ENCODE measurements at regions of chr6 and their contacts with region 1.

Region 1: DNA sequence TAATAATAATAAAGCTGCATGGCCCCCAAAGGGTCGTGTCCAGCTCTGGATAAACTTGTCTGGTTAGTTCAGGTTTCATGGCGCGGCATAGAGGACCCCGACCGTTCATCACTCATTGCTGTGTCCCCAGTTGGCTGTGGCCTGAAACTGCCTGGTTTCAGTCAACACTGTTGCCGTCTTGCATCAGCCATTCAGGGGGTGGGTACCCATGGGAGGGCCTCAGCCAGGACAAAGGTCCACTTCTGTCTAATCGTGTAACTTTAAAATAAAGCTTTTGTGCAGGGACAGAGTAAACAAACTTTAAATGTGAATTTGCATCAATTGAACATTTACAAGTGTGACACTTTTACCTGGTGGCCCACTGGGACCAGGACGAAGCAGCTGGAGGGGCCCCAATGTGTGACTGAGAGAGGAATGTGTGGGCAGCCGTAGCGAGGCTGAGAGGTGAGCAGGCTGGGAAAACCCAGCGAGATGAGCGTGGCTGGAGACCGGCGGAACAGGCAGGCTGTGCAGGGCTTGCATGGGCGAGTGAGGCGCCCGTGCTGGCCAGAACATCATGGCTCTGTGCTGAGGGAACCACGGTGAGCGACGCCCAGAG is 22.3 kb upstream of the UNC93A start:
- DNase-seq: peak; percentile 93
- ATAC-seq: peak; percentile 95
- H3K4me3 ChIP-seq: peak overlapping the region; percentile 2 to 58 (median 5); a peak in 3 of 6 replicates
- H3K27ac ChIP-seq: peak overlapping the region; percentile 88
- H3K4me1 ChIP-seq: peaks cover 88% of the 10 kb centered on the region
- H3K27me3 ChIP-seq: no peaks in the 10 kb centered on the region
- CTCF ChIP-seq: peak; percentile 24; the same call in 1 of the 2 replicates
- EP300 ChIP-seq: peak; percentile 71 to 94; a peak in 3 of 4 replicates
- POLR2A ChIP-seq: peak; percentile 74 to 83
- RAD21 ChIP-seq: peak; percentile 74

Region 2: GRCh38 chr6:167163476-167164011 is 105.2 kb before region 1 on chr6:
- CTCF ChIA-PET with region 1: no interaction called
- POLR2A ChIA-PET with region 1: no interaction called
- in situ Hi-C with region 1: no loop called
- intact Hi-C with region 1: no loop called
- DNase-seq: no peak
- ATAC-seq: no peak
- H3K4me3 ChIP-seq: no peak overlapping the region
- H3K27ac ChIP-seq: no peak overlapping the region
- H3K4me1 ChIP-seq: peaks cover 17% of the 10 kb centered on the region
- H3K27me3 ChIP-seq: peaks cover 1 to 46% of the 10 kb centered on the region in 2 experiments; a peak in 4 of 5 replicates
- CTCF ChIP-seq: no peak
- EP300 ChIP-seq: no peak
- POLR2A ChIP-seq: no peak
- RAD21 ChIP-seq: no peak

Region 3: GRCh38 chr6:167221400-167222201 is 47.2 kb before region 1 on chr6:
- CTCF ChIA-PET with region 1: no interaction called
- POLR2A ChIA-PET with region 1: interaction called, 48 read pairs
- in situ Hi-C with region 1: no loop called
- intact Hi-C with region 1: loop called (anchors 1 kb)
- DNase-seq: no peak
- ATAC-seq: no peak
- H3K4me3 ChIP-seq: no peak overlapping the region
- H3K27ac ChIP-seq: peak overlapping the region; percentile 82
- H3K4me1 ChIP-seq: peaks cover 95% of the 10 kb centered on the region
- H3K27me3 ChIP-seq: no peaks in the 10 kb centered on the region
- CTCF ChIP-seq: no peak
- EP300 ChIP-seq: no peak
- POLR2A ChIP-seq: no peak
- RAD21 ChIP-seq: no peak

Region 4: DNA sequence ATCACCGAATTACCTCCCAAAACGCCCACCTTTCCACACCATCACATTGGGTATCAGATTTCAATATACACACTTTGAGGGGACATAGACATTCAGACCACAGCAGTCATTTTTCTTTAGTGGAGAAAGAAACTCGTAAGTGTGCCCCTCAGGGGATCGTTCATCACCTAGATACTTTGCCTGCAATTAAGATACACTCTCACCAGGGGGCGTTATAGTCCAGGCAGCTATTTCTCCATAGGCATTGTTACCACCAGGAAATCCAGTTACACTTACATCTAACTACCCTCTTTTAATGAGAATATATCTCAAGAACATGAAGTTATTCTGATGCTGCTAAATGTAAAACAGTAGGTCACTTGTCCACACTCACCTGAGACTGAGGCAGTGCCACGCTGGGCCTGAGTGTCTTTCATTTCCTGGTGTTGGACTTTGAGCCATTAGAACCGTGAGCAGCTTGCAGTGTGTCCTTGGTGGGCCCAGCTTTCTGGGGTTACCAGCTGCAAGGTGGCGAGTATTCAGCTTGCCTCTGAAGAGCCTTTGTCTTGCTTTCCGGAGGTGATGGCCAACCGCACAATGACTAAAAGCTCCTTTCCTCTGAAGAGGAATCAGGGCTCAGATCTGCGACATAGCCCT is 12.7 kb before region 1 on chr6:
- CTCF ChIA-PET with region 1: no interaction called
- POLR2A ChIA-PET with region 1: interaction called, 28 read pairs
- in situ Hi-C with region 1: no loop called
- intact Hi-C with region 1: no loop called
- DNase-seq: no peak
- ATAC-seq: no peak
- H3K4me3 ChIP-seq: no peak overlapping the region
- H3K27ac ChIP-seq: no peak overlapping the region
- H3K4me1 ChIP-seq: peaks cover 61% of the 10 kb centered on the region
- H3K27me3 ChIP-seq: no peaks in the 10 kb centered on the region
- CTCF ChIP-seq: peak; percentile 59
- EP300 ChIP-seq: no peak
- POLR2A ChIP-seq: no peak
- RAD21 ChIP-seq: peak; percentile 38; the same call in 1 of the 2 replicates

Region 5: DNA sequence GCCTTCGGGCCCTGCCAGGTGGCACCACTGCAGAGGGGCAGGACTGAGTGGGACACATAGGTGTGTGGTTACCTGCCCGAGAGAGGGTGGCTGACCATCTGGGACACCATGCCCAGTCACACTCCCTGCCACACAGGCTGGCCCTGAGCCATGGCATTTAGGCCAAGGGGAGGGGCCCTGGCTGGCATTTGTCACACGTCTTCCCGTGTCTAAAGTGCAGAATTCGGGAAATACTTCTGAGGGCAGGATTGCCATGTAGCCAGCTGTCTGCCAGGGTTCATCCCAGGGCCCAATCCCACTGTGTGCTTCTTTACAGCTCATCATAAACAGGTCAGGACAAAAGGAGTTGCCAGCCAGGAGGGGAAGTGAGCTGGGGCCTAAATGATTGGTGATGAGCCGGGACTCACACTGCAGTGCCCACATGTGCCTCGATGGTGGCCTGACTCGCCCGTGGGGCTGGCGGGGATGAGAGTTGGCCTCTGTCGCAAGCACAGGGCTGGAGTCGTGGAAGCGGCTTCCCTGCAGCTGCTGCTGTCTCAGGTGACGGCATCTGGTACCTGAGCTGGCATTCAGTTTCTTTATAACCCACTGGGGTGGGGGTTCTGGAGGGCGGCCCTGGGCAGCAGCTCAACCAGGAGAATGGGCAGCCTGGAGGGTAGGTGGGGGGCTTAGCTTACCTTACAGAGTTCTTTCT is 16.4 kb after region 1 on chr6:
- CTCF ChIA-PET with region 1: no interaction called
- POLR2A ChIA-PET with region 1: interaction called, 34 read pairs
- in situ Hi-C with region 1: no loop called
- intact Hi-C with region 1: no loop called
- DNase-seq: no peak
- ATAC-seq: no peak
- H3K4me3 ChIP-seq: no peak overlapping the region
- H3K27ac ChIP-seq: no peak overlapping the region
- H3K4me1 ChIP-seq: peaks cover 92% of the 10 kb centered on the region
- H3K27me3 ChIP-seq: no peaks in the 10 kb centered on the region
- CTCF ChIP-seq: no peak
- EP300 ChIP-seq: no peak
- POLR2A ChIP-seq: no peak
- RAD21 ChIP-seq: no peak

Region 6: DNA sequence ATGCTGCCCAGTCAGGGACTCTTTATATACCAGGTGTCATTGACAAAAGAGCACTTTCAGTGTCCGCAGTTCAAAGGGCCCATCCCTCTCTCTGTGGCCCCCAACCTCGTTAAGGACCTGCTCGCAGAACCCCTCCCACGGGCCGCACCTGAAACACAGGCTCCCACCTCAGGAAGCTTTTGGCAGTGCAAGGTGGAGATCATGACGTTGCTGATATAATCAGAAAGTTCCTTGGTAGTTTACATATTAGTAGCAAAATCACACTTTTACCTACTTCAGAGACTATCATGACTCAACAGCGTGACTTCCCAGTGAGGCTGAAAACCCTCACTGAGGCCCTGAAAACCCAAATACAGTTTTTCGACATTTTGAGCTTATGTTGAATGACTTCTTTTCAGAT is 60.2 kb after region 1 on chr6:
- CTCF ChIA-PET with region 1: no interaction called
- POLR2A ChIA-PET with region 1: no interaction called
- in situ Hi-C with region 1: no loop called
- intact Hi-C with region 1: no loop called
- DNase-seq: no peak
- ATAC-seq: no peak
- H3K4me3 ChIP-seq: no peak overlapping the region
- H3K27ac ChIP-seq: no peak overlapping the region
- H3K4me1 ChIP-seq: peaks cover 43% of the 10 kb centered on the region
- H3K27me3 ChIP-seq: no peaks in the 10 kb centered on the region
- CTCF ChIP-seq: no peak
- EP300 ChIP-seq: no peak
- POLR2A ChIP-seq: no peak
- RAD21 ChIP-seq: no peak

Region 7: GRCh38 chr6:167341665-167342655 is 73.2 kb after region 1 on chr6:
- CTCF ChIA-PET with region 1: no interaction called
- POLR2A ChIA-PET with region 1: interaction called, 15 read pairs
- in situ Hi-C with region 1: no loop called
- intact Hi-C with region 1: no loop called
- DNase-seq: peak; percentile 100
- ATAC-seq: peak; percentile 91
- H3K4me3 ChIP-seq: peak overlapping the region in 1 of 3 experiments; percentile 14; a peak in 1 of 6 replicates
- H3K27ac ChIP-seq: peak overlapping the region; percentile 79
- H3K4me1 ChIP-seq: peaks cover 81% of the 10 kb centered on the region
- H3K27me3 ChIP-seq: no peaks in the 10 kb centered on the region
- CTCF ChIP-seq: 0 out of 2 replicates have a peak, but pooled peaks have one; percentile 20
- EP300 ChIP-seq: peak; percentile 99 to 100
- POLR2A ChIP-seq: 0 out of 4 replicates have a peak, but pooled peaks of 1 of the 2 experiments have one; percentile 24
- RAD21 ChIP-seq: peak; percentile 15; the same call in 1 of the 2 replicates